ENCODE measurements at regions of chr13 and their contacts with region 1.

Region 1: DNA sequence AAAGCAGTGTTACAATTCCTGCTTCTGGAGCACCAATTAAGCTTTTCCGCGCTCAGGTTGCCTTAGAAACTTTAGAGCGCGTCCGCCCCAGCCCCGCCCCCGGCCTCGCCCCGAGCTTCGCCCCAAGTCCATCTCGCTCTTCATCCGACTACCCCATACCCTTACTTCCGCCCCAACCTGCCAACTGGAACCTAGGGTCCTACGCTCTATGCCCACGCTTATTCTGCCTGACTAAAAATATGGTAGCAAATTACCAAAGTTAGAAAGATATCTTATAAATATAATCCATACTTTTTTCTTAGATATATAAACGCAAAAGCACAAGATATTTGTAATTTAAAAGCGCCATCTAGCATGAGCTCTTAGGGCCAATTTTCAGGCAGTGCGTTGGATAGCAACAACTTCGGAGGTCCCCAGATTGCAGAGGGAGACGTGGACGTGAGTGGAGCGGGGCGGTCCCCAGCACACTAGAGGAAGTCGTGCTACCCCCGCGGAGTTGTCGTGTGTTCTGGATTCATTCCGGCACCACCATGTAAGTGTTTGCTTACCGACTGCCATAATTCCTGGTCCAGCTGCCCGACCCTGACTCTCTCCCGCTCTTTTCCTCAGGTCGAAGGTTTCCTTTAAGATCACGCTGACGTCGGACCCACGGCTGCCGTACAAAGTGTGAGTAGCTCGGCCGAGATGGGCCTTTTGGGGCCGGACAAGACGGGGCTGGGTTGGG is at the start of gene UFM1:
- DNase-seq: peak; percentile 58 to 94
- H3K4me3 ChIP-seq: peak within 1 kb of the TSS; percentile 69 to 81
- H3K27ac ChIP-seq: peak within 1 kb of the TSS; percentile 76 to 87
- H3K4me1 ChIP-seq: peaks cover 0 to 9% of the 10 kb centered on the region in 2 donors
- H3K27me3 ChIP-seq: no peaks in the 10 kb centered on the region
- CTCF ChIP-seq: no peak
- total RNA-seq, gene UFM1: 28.8 TPM

Region 2: GRCh38 chr13:37058910-37059847 is 1290.4 kb before region 1 on chr13 and contains the start of gene SUPT20H:
- intact Hi-C with region 1: loop called (anchors 5 kb)
- DNase-seq: peak; percentile 65 to 95
- H3K4me3 ChIP-seq: peak within 1 kb of the TSS; percentile 70 to 85
- H3K27ac ChIP-seq: peak within 1 kb of the TSS; percentile 89
- H3K4me1 ChIP-seq: peaks cover 7 to 9% of the 10 kb centered on the region in 2 donors
- H3K27me3 ChIP-seq: no peaks in the 10 kb centered on the region
- CTCF ChIP-seq: peak in 1 of 3 experiments; percentile 3
- total RNA-seq, gene SUPT20H: 9.9 TPM

Region 3: DNA sequence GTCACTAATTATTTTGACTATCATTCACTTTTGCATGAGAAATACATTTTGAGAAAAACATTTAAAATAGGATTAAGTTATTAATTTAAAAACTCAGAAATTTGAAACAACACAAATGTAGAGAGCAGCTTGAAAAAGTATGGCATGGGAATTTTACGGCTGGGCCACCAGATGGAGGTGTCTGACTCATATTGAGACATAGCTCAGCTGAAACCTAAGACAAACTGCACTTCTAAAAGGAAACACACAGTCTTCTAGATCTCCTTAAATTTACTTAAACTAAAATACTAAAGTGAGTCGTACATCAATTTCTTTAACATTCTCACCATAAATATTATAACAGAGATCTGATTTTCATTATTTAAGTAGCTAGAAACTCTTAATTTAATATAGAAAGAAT is 709.1 kb before region 1 on chr13:
- intact Hi-C with region 1: loop called (anchors 10 kb)
- DNase-seq: no peak
- H3K4me3 ChIP-seq: no peak overlapping the region
- H3K27ac ChIP-seq: no peak overlapping the region
- H3K4me1 ChIP-seq: no peaks in the 10 kb centered on the region
- H3K27me3 ChIP-seq: no peaks in the 10 kb centered on the region
- CTCF ChIP-seq: peak in 2 of 3 experiments; percentile 46 to 47

Region 4: GRCh38 chr13:37869756-37870488 is 479.6 kb before region 1 on chr13 and contains the start of gene TRPC4:
- intact Hi-C with region 1: loop called (anchors 10 kb)
- DNase-seq: peak in 1 of 2 donors; percentile 64
- H3K4me3 ChIP-seq: peak within 1 kb of the TSS; percentile 68 to 75
- H3K27ac ChIP-seq: peak within 1 kb of the TSS; percentile 9 to 48
- H3K4me1 ChIP-seq: no peaks in the 10 kb centered on the region
- H3K27me3 ChIP-seq: no peaks in the 10 kb centered on the region
- CTCF ChIP-seq: peak in 2 of 3 experiments; percentile 24 to 47
- total RNA-seq, gene TRPC4: 8.1 TPM

Region 5: GRCh38 chr13:38255296-38255995 is 94.1 kb before region 1 on chr13:
- intact Hi-C with region 1: no loop called
- DNase-seq: no peak
- H3K4me3 ChIP-seq: no peak overlapping the region
- H3K27ac ChIP-seq: no peak overlapping the region
- H3K4me1 ChIP-seq: no peaks in the 10 kb centered on the region
- H3K27me3 ChIP-seq: no peaks in the 10 kb centered on the region
- CTCF ChIP-seq: no peak

Region 6: GRCh38 chr13:38582133-38582532 is 232.6 kb after region 1 on chr13:
- intact Hi-C with region 1: no loop called
- DNase-seq: no peak
- H3K4me3 ChIP-seq: no peak overlapping the region
- H3K27ac ChIP-seq: no peak overlapping the region
- H3K4me1 ChIP-seq: no peaks in the 10 kb centered on the region
- H3K27me3 ChIP-seq: no peaks in the 10 kb centered on the region
- CTCF ChIP-seq: peak in 2 of 3 experiments; percentile 3 to 25

Measured in ascending aorta (tissue), 2 donors.